ENCODE measurements at regions of chr11 and their contacts with region 1.

Region 1: GRCh38 chr11:67167086-67167485 is 48.0 kb downstream of the KDM2A start:
- DNase-seq: no peak
- H3K4me3 ChIP-seq: no peak overlapping the region
- H3K27ac ChIP-seq: no peak overlapping the region
- H3K4me1 ChIP-seq: no peaks in the 10 kb centered on the region
- H3K27me3 ChIP-seq: no peaks in the 10 kb centered on the region
- CTCF ChIP-seq: no peak

Region 2: DNA sequence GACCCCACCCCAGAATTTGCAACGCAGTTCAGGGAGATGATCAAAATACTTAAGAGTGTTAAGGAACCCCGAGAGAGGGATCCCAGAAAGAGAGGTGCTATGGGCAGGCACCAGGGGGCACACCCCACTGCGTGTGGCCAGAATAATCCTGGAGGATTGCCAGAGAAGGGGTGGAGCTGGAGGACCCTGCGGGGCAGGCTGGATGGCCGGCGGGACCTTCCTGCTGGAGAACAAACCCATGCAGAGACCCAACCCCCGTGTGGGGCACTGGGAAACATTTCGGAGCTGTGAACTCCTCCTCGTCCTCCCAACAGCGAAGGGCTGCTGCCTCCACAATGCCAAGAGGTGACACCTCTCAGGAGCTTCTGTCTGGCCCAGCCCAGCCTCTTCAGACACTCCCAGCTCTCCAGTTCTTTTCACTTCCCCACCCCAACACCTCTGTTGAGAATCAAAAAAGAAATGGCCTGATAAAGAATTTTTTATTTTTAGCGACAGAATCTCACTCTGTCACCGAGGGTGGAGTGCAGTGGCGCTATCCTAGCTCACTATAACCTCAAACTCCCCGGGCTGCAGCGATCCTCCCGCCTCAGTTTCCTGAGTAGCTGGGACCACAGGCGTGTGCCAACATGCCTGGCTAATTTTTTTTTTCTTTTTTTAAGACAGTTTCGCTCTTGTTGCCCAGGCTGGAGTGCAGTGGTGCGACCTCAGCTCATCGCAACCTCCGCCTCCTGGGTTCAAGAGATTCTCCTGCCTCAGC is 84.9 kb before region 1 on chr11:
- intact Hi-C with region 1: loop called (anchors 5 kb)
- DNase-seq: peak; percentile 28
- H3K4me3 ChIP-seq: no peak overlapping the region
- H3K27ac ChIP-seq: no peak overlapping the region
- H3K4me1 ChIP-seq: peaks cover 5% of the 10 kb centered on the region
- H3K27me3 ChIP-seq: no peaks in the 10 kb centered on the region
- CTCF ChIP-seq: no peak

Measured in colonic mucosa (tissue), 4 donors.